Panc1 (cell line): ENCODE measurements at regions of chr21 and their contacts with region 1.

Region 1: GRCh38 chr21:22743085-22743484 is 1744.9 kb downstream of the NCAM2 start:
- DNase-seq: no peak
- ATAC-seq: no peak
- H3K4me3 ChIP-seq: no peak overlapping the region
- H3K27ac ChIP-seq: no peak overlapping the region
- H3K4me1 ChIP-seq: no peaks in the 10 kb centered on the region
- H3K27me3 ChIP-seq: no peaks in the 10 kb centered on the region
- CTCF ChIP-seq: no peak

Region 2: DNA sequence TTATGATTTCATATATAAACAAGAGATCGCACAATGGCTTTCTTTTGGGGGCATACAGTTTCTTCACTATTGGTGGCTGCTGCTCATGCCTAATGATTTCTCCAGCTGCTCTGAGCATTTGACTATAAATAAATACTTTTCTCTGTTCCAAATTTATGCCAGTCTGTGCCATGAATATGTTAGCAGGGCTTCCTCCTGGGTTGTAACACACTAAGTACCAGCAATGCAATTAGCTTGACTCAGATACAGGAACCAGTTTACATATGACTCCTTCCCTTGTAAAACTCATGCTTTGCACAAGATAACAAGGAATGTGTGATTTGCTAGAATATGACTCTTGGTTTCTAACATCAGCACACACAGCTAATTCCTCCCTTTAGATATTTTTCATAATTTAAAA is 115.2 kb before region 1 on chr21:
- CTCF ChIA-PET with region 1: interaction called, 13 read pairs
- POLR2A ChIA-PET with region 1: no interaction called
- in situ Hi-C with region 1: no loop called
- intact Hi-C with region 1: no loop called
- DNase-seq: no peak
- ATAC-seq: no peak
- H3K4me3 ChIP-seq: no peak overlapping the region
- H3K27ac ChIP-seq: no peak overlapping the region
- H3K4me1 ChIP-seq: no peaks in the 10 kb centered on the region
- H3K27me3 ChIP-seq: no peaks in the 10 kb centered on the region
- CTCF ChIP-seq: no peak

Region 3: DNA sequence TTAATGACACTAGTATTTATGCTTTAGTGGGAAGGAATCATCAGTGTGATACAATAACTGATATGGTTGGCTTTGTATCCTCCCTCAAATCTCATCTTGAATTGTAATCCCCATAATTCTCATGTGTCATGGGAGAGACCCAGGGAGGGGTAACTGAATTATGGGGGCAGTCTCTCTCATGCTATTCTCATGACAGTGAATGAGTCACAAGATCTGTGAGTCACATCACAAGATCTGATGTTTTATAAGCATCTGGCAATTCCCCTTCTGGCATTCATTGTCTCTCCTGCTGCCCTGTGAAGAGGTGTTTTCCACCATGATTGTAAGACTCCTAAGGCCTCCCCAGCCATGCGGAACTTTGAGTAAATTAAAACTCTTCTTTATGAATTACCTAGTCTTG is 15.4 kb after region 1 on chr21:
- CTCF ChIA-PET with region 1: no interaction called
- POLR2A ChIA-PET with region 1: no interaction called
- in situ Hi-C with region 1: no loop called
- intact Hi-C with region 1: no loop called
- DNase-seq: no peak
- ATAC-seq: no peak
- H3K4me3 ChIP-seq: no peak overlapping the region
- H3K27ac ChIP-seq: no peak overlapping the region
- H3K4me1 ChIP-seq: no peaks in the 10 kb centered on the region
- H3K27me3 ChIP-seq: no peaks in the 10 kb centered on the region
- CTCF ChIP-seq: no peak